ENCODE measurements at regions of chr11 and their contacts with region 1.

Region 1: GRCh38 chr11:4607781-4608666 is at the start of gene TRIM68:
- DNase-seq: peak; percentile 97
- ATAC-seq: peak; percentile 100
- H3K4me3 Mint-ChIP-seq: peak within 1 kb of the TSS; percentile 90
- H3K27ac Mint-ChIP-seq: peak within 1 kb of the TSS; percentile 90
- H3K4me1 Mint-ChIP-seq: peaks cover 35% of the 10 kb centered on the region
- H3K27me3 Mint-ChIP-seq: no peaks in the 10 kb centered on the region
- total RNA-seq, gene TRIM68: 8.9 to 9.2 TPM

Region 2: DNA sequence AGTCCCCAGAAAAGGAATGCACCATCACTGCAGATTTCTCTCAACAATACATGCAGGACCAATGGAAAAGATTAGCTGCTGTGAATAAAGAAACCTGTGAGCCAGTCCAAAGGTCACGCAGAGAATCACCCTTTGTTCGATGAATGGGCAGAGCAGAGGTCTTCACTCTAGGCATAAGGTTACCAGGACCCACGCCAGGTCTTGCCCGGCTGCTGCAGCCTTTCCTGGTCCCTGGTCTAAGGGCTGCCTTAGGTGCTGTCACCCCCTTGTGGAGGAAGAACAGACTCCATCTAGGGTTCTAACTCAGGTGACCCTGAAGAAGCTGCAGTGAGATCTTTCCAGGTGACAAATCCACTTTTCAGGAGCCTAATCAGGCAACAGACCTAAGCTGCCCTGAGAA is 1586.9 kb before region 1 on chr11:
- CTCF ChIA-PET with region 1: no interaction called
- POLR2A ChIA-PET with region 1: no interaction called
- intact Hi-C with region 1: no loop called
- DNase-seq: peak; percentile 24
- ATAC-seq: no peak
- H3K4me3 Mint-ChIP-seq: no peak overlapping the region
- H3K27ac Mint-ChIP-seq: no peak overlapping the region
- H3K4me1 Mint-ChIP-seq: peaks cover 30% of the 10 kb centered on the region
- H3K27me3 Mint-ChIP-seq: no peaks in the 10 kb centered on the region

Region 3: GRCh38 chr11:4480574-4481566 is 127.2 kb before region 1 on chr11:
- CTCF ChIA-PET with region 1: no interaction called
- POLR2A ChIA-PET with region 1: no interaction called
- intact Hi-C with region 1: loop called in 1 of 2 experiments (anchors 5 kb)
- DNase-seq: peak; percentile 29
- ATAC-seq: peak; percentile 87
- H3K4me3 Mint-ChIP-seq: no peak overlapping the region
- H3K27ac Mint-ChIP-seq: peak overlapping the region; percentile 22
- H3K4me1 Mint-ChIP-seq: peaks cover 15% of the 10 kb centered on the region
- H3K27me3 Mint-ChIP-seq: peaks cover 7% of the 10 kb centered on the region

Region 4: DNA sequence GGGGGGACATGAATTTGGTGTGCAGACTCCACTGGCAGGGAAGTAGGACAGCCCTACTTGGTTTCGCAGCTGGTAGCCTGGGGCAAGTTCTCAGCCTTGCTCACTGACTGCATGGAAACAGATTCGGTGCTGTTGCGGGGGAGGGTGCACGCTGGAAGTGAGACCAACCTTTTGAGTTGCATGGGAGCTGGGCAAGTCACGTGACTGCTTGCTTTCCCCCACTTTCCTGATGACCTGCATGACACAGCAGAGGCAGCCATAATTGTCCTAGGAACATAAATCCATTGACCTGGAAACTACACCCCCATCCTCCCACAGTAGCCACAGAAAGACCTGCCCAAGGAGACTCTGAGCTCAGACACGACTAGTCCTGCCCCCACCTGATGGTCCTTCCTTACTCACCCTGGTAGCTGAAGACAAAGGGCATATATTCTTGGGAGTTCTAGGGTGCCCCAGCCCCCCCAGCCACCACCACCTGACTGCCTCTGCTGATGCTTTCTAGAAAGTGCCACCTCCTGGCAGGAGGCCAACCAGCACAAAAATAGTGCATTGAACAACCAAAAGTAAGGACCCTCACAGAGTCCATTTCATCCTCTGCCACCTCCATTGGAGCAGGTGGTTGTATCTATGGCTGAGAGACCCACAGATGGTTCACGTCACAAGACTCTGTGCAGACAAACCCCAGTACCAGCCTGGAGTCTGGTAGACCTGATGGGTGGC is 650.7 kb after region 1 on chr11:
- CTCF ChIA-PET with region 1: no interaction called
- POLR2A ChIA-PET with region 1: no interaction called
- intact Hi-C with region 1: no loop called
- DNase-seq: no peak
- ATAC-seq: no peak
- H3K4me3 Mint-ChIP-seq: no peak overlapping the region
- H3K27ac Mint-ChIP-seq: no peak overlapping the region
- H3K4me1 Mint-ChIP-seq: no peaks in the 10 kb centered on the region
- H3K27me3 Mint-ChIP-seq: peaks cover 5% of the 10 kb centered on the region

Region 5: GRCh38 chr11:5624489-5625279 is 1016.7 kb after region 1 on chr11 and contains the start of gene TRIM34:
- CTCF ChIA-PET with region 1: no interaction called
- POLR2A ChIA-PET with region 1: no interaction called
- intact Hi-C with region 1: loop called in 1 of 2 experiments (anchors 10 kb)
- DNase-seq: peak; percentile 72
- ATAC-seq: peak; percentile 95
- H3K4me3 Mint-ChIP-seq: peak within 1 kb of the TSS; percentile 87
- H3K27ac Mint-ChIP-seq: peak within 1 kb of the TSS; percentile 95
- H3K4me1 Mint-ChIP-seq: peaks cover 35% of the 10 kb centered on the region
- H3K27me3 Mint-ChIP-seq: no peaks in the 10 kb centered on the region
- total RNA-seq, gene TRIM34: 10.4 to 11.8 TPM

Measured in activated CD4-positive, alpha-beta T cell treated with anti-CD3 and anti-CD28 coated beads for 36 hours (primary cell).